Activated T-helper 1 cell treated with anti-CD3 and anti-CD28 coated beads, Interleukin-12 subunit alpha, Interleukin-12 subunit beta, Interleukin-2, Interleukin-4 antibody, amounts not matched to agents 30 ng/mL and 10 ng/mL and 1 ng/mL, durations not matched to agents 14 hours and 24 hours and 36 hours (primary cell): ENCODE measurements at regions of chr6 and their contacts with region 1.

Region 1: GRCh38 chr6:26183581-26184366 is 96.5 kb downstream of the HFE start:
- DNase-seq: peak; percentile 71
- H3K4me3 Mint-ChIP-seq: peak overlapping the region; percentile 86
- H3K27ac Mint-ChIP-seq: peak overlapping the region; percentile 97
- H3K4me1 Mint-ChIP-seq: peaks cover 58% of the 10 kb centered on the region
- H3K27me3 Mint-ChIP-seq: no peaks in the 10 kb centered on the region

Region 2: DNA sequence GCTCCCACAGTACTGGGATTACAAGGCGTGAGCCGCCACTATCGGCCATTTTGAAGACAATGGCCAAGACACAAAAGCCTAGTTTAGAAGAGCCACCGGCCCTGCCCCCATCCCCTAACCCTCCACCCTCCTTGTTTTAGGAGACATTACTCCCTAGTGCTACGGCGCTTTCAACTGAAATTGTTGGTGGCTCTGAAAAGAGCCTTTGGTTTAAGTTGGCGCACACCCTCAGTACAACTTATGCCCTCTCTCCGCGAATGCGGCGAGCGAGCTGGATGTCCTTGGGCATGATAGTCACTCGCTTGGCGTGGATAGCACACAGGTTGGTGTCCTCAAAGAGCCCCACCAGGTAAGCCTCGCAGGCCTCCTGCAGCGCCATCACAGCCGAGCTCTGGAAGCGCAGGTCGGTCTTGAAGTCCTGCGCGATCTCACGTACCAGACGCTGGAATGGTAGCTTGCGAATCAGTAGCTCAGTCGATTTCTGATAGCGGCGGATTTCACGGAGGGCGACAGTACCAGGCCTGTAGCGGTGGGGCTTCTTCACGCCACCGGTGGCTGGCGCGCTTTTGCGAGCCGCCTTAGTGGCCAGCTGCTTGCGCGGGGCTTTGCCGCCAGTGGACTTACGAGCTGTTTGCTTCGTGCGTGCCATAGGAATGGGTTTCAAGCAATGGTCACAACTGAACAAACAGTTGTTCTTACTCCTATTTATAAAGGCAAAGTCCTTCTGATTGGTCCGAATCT is 66.4 kb after region 1 on chr6:
- intact Hi-C with region 1: loop called (anchors 2 kb)
- DNase-seq: peak; percentile 68
- H3K4me3 Mint-ChIP-seq: peak overlapping the region; percentile 90
- H3K27ac Mint-ChIP-seq: peak overlapping the region; percentile 99
- H3K4me1 Mint-ChIP-seq: peaks cover 55% of the 10 kb centered on the region
- H3K27me3 Mint-ChIP-seq: peaks cover 2% of the 10 kb centered on the region